ENCODE measurements at regions of chr12 and their contacts with region 1.

Region 1: GRCh38 chr12:26701604-26702215 is 131.3 kb downstream of the ITPR2 start:
- DNase-seq: no peak
- H3K4me3 ChIP-seq: no peak overlapping the region
- H3K27ac ChIP-seq: no peak overlapping the region
- H3K4me1 ChIP-seq: peaks cover 0 to 4% (median 2%) of the 10 kb centered on the region in 4 experiments; a peak in 2 of 7 replicates
- H3K27me3 ChIP-seq: no peaks in the 10 kb centered on the region
- CTCF ChIP-seq: peak in 2 of 3 experiments; percentile 33 to 34; a peak in 2 of 4 replicates
- EP300 ChIP-seq: no peak
- POLR2A ChIP-seq: no peak
- RAD21 ChIP-seq: peak; percentile 53 to 60

Region 2: DNA sequence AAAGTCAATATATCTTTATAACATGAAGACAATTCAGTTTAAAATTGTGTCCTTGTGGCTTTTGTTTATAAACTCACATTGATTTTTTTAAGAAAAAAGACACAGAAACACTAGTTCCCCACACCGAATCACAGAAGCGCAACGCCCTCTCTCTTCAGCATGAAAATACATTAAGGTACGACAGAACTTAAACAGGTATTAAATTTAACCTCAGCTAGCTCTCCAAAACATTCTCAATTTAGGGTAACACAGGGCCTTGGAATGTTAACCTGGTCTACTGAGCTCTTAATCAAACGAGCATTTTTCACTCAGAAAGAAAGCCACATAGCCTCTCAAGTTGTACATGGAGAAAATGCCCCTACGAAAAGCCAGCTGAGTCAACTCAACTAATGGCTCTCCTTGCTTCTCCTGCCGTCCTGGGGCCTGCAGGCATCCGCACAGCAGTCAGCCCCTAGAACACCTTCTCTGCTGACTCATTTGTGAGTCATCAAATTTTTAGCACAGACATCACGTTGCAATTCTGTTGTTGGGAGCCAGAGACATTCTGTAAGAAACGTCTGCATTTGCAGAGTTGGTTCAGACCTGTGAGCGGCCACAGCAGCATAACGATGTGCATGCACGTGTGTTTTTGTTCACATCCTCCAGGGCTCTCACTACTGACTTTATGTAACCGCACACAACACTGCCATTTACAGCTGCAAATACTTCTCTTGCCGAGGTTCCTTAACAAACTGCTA is 10.3 kb before region 1 on chr12:
- CTCF ChIA-PET with region 1: interaction called, 21 read pairs
- POLR2A ChIA-PET with region 1: no interaction called
- DNase-seq: peak in 1 of 2 experiments; percentile 51
- H3K4me3 ChIP-seq: no peak overlapping the region
- H3K27ac ChIP-seq: no peak overlapping the region; the same call in 1 of the 2 replicates
- H3K4me1 ChIP-seq: peaks cover 0 to 8% (median 6%) of the 10 kb centered on the region in 4 experiments; a peak in 4 of 7 replicates
- H3K27me3 ChIP-seq: no peaks in the 10 kb centered on the region
- CTCF ChIP-seq: no peak
- EP300 ChIP-seq: 0 out of 3 replicates have a peak, but pooled peaks of 1 of the 2 experiments have one; percentile 43
- POLR2A ChIP-seq: no peak
- RAD21 ChIP-seq: no peak

Measured in H1 (cell line).